Activated naive CD8-positive, alpha-beta T cell treated with anti-CD3 and anti-CD28 coated beads, Interleukin-2, amount 10 ng/mL, durations not matched to agents 7 days and 5 days (primary cell): ENCODE measurements at regions of chr16 and their contacts with region 1.

Region 1: DNA sequence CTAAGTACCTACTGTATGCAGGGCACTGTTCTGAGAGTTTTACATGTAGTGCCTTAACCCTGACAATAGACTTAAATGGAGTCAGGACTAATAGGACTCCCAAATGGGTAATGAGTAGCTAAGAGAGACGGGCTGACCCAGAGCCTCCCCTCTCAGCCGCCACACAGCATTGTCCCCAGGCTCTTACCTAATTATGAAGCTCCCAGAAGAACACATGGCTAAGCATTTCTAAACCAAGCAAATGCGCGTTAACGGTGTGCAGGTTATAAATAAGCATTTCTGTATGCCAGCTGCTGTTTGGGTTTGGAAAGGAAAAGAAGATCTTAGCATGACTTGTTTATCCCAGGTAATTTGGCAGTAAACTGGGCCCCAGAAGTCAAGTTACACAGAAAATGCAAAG is 14.3 kb downstream of the KATNIP start:
- DNase-seq: no peak
- ATAC-seq: no peak
- H3K4me3 Mint-ChIP-seq: no peak overlapping the region
- H3K27ac Mint-ChIP-seq: no peak overlapping the region
- H3K4me1 Mint-ChIP-seq: no peaks in the 10 kb centered on the region
- H3K27me3 Mint-ChIP-seq: peaks cover 2% of the 10 kb centered on the region

Region 2: GRCh38 chr16:27543801-27544200 is 20.4 kb before region 1 on chr16:
- POLR2A ChIA-PET with region 1: interaction called, 10 read pairs
- DNase-seq: no peak
- ATAC-seq: no peak
- H3K4me3 Mint-ChIP-seq: no peak overlapping the region
- H3K27ac Mint-ChIP-seq: no peak overlapping the region
- H3K4me1 Mint-ChIP-seq: peaks cover 20% of the 10 kb centered on the region
- H3K27me3 Mint-ChIP-seq: no peaks in the 10 kb centered on the region